ENCODE measurements at regions of chr6 and their contacts with region 1.

Region 1: DNA sequence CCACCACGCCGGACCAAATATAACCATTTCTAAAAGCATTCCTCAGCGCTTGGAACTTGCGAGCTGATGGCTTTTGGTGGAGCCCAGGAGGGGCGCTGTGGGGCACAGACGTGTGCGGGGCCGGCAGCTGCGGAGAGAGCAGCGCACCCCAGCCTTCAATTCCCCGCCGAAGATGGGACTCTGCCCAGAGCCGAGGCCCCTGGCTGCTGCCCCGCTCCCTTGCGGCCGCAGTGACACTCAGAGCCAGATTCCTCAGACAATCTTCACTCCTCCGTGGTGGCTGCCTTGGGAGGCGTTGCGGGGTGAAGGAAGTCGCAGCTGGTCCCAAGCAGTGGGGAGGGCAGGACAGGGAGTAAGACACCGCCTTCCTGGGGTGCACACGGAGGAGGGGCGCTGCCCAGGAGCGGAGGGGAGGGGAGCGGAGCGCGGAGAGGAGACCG is 87.7 kb downstream of the TMEM242 start:
- DNase-seq: peak; percentile 39
- ATAC-seq: peak; percentile 69
- H3K4me3 Mint-ChIP-seq: peak overlapping the region; percentile 90
- H3K27ac Mint-ChIP-seq: peak overlapping the region; percentile 37
- H3K4me1 Mint-ChIP-seq: peaks cover 18% of the 10 kb centered on the region
- H3K27me3 Mint-ChIP-seq: peaks cover 44% of the 10 kb centered on the region
- CTCF ChIP-seq: no peak

Region 2: DNA sequence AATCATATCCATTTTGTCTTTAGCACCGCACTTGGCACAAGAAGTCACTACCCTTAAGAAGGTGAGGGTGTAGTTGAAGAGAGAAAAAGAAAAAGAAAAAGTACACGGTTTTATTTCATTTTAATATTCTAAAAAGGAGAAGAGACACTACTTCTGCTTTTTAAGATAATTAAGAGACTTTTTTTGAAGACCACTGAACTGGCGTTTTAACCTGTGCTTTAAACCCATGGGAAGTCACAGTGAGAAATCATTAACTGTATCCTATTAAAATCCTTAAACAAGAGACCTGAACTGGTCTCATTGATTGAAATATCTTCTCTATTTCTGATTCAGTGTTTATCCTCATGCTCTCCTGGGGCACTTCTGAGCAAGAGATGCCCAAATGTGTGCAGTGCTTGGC is 155.8 kb before region 1 on chr6:
- CTCF ChIA-PET with region 1: no interaction called
- POLR2A ChIA-PET with region 1: no interaction called
- intact Hi-C with region 1: no loop called
- DNase-seq: no peak
- ATAC-seq: peak; percentile 15
- H3K4me3 Mint-ChIP-seq: no peak overlapping the region
- H3K27ac Mint-ChIP-seq: peak overlapping the region; percentile 37
- H3K4me1 Mint-ChIP-seq: peaks cover 82% of the 10 kb centered on the region
- H3K27me3 Mint-ChIP-seq: no peaks in the 10 kb centered on the region
- CTCF ChIP-seq: no peak

Region 3: GRCh38 chr6:157221007-157221816 is 14.4 kb before region 1 on chr6:
- CTCF ChIA-PET with region 1: interaction called, 6 read pairs
- POLR2A ChIA-PET with region 1: interaction called, 7 read pairs
- intact Hi-C with region 1: loop called (anchors 1 kb)
- DNase-seq: peak; percentile 75
- ATAC-seq: peak; percentile 61
- H3K4me3 Mint-ChIP-seq: peak overlapping the region; percentile 77
- H3K27ac Mint-ChIP-seq: peak overlapping the region; percentile 15
- H3K4me1 Mint-ChIP-seq: peaks cover 44% of the 10 kb centered on the region
- H3K27me3 Mint-ChIP-seq: no peaks in the 10 kb centered on the region
- CTCF ChIP-seq: no peak

Measured in activated B cell treated with CpG ODN at 0.5 μM for 24 hours (primary cell).